Calu3 (cell line): ENCODE measurements at regions of chr4 and their contacts with region 1.

Region 1: GRCh38 chr4:91734682-91735081 is 569.1 kb upstream of the GRID2 start:
- DNase-seq: no peak
- H3K4me3 Mint-ChIP-seq: no peak overlapping the region
- H3K27ac Mint-ChIP-seq: no peak overlapping the region
- H3K4me1 Mint-ChIP-seq: no peaks in the 10 kb centered on the region
- H3K27me3 Mint-ChIP-seq: no peaks in the 10 kb centered on the region
- CTCF ChIP-seq: no peak

Region 2: DNA sequence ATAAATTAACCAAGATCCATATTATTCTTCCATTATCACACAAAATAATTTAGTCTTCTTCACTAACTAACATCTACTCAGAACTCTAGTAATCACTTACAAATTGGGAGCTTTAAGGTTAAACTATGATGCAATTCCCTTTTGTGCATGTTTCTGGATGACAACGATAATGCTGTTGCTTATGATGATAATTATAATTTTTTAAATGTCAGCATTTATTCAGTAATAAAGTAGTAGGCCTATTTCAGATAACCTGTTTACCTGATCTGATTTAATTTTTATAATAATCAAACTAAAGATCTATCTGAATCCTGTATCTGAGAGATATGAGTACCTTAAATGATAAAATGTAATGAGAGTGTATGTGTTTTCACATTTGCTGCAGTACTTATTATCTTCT is 61.3 kb after region 1 on chr4:
- CTCF ChIA-PET with region 1: no interaction called
- intact Hi-C with region 1: no loop called
- DNase-seq: no peak
- H3K4me3 Mint-ChIP-seq: no peak overlapping the region
- H3K27ac Mint-ChIP-seq: no peak overlapping the region
- H3K4me1 Mint-ChIP-seq: no peaks in the 10 kb centered on the region
- H3K27me3 Mint-ChIP-seq: no peaks in the 10 kb centered on the region
- CTCF ChIP-seq: no peak

Region 3: DNA sequence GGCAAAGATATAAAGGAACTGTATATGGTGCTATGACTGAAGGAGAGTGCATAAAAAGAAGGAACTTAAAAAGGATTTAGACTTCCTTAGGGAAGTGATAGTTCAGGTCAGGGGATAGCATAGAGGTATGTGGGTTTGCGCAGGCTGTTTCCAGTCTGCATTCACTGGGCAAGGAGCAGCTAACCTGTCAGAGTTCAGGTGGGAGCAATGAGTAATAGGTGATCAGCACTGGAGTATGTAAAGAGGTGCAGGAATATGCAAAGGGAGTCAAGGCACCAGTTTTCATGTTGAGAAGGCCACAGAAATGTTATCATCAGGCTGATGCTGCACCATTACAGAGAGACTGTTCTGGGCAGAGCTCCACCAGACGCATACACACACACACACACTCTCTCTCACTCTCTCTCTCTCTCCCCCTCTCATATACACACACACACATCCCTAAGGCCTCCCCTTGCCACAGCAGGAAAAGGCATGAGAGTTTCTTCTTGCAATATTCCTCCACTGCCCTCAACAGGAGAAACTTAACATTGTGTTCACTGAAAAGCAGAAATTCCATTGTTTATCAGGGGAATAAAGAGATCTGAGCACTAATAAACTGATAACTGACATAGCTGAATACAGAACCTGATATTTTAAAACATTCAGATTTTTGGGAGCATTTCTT is 312.7 kb after region 1 on chr4:
- CTCF ChIA-PET with region 1: no interaction called
- intact Hi-C with region 1: loop called (anchors 10 kb)
- DNase-seq: no peak
- H3K4me3 Mint-ChIP-seq: no peak overlapping the region
- H3K27ac Mint-ChIP-seq: no peak overlapping the region
- H3K4me1 Mint-ChIP-seq: no peaks in the 10 kb centered on the region
- H3K27me3 Mint-ChIP-seq: no peaks in the 10 kb centered on the region
- CTCF ChIP-seq: no peak

Region 4: GRCh38 chr4:92305148-92305877 is 570.6 kb after region 1 on chr4:
- CTCF ChIA-PET with region 1: no interaction called
- intact Hi-C with region 1: loop called (anchors 10 kb)
- DNase-seq: peak; percentile 55
- H3K4me3 Mint-ChIP-seq: peak overlapping the region; percentile 71
- H3K27ac Mint-ChIP-seq: peak overlapping the region; percentile 64
- H3K4me1 Mint-ChIP-seq: peaks cover 8% of the 10 kb centered on the region
- H3K27me3 Mint-ChIP-seq: peaks cover 16% of the 10 kb centered on the region
- CTCF ChIP-seq: no peak

Region 5: DNA sequence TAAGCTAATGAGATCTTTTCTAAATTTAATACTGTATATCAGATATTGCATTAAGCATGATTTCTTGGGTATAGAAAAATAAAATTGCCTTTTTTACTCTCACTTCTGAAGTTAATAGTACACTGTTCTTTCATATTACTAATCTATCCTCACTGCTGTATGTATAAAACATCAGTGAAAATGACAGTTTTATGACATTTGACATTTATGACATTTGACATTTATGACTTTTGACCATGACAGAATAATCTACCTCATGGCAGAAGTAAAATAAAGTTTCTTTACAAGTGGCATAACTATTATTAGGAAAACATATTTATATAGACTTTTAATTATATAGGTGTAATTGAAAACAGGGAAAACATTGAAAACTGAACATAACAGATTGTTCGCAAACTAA is 582.4 kb after region 1 on chr4:
- CTCF ChIA-PET with region 1: no interaction called
- intact Hi-C with region 1: no loop called
- DNase-seq: no peak
- H3K4me3 Mint-ChIP-seq: no peak overlapping the region
- H3K27ac Mint-ChIP-seq: no peak overlapping the region
- H3K4me1 Mint-ChIP-seq: no peaks in the 10 kb centered on the region
- H3K27me3 Mint-ChIP-seq: no peaks in the 10 kb centered on the region
- CTCF ChIP-seq: no peak